GM10248 (cell line): ENCODE measurements at regions of chr17 and their contacts with region 1.

Region 1: GRCh38 chr17:73156166-73156840 is 8.5 kb upstream of the SSTR2 start:
- DNase-seq: peak; percentile 81
- CTCF ChIP-seq: peak; percentile 83

Region 2: GRCh38 chr17:73133911-73134649 is 22.2 kb before region 1 on chr17:
- CTCF ChIA-PET with region 1: interaction called, 12 read pairs
- POLR2A ChIA-PET with region 1: no interaction called
- DNase-seq: no peak
- CTCF ChIP-seq: no peak

Region 3: DNA sequence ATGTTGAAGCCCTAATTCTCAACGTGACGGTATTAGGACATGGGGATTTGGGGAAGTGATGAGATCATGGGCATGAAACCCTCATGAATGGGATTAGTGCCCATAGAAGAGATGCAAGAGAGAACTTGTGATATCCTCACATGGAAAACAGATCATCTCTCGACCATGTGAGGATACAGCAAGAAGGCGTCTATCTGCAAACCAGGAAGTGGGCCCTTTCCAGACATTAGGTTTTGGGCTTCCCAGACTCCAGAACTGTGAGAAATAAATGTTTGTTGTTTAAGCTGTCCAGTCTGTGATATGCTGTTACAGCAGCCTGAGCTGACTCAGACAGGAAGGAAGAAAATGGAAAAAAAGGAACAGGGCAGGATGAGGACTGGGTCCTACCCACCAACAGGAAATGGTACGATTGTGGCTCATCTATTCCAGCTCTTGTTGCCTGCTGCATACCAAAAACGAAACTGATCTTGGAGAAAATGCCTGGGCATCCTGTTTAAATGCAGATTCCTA is 13.4 kb before region 1 on chr17:
- CTCF ChIA-PET with region 1: interaction called, 13 read pairs
- POLR2A ChIA-PET with region 1: no interaction called
- DNase-seq: no peak
- CTCF ChIP-seq: no peak

Region 4: DNA sequence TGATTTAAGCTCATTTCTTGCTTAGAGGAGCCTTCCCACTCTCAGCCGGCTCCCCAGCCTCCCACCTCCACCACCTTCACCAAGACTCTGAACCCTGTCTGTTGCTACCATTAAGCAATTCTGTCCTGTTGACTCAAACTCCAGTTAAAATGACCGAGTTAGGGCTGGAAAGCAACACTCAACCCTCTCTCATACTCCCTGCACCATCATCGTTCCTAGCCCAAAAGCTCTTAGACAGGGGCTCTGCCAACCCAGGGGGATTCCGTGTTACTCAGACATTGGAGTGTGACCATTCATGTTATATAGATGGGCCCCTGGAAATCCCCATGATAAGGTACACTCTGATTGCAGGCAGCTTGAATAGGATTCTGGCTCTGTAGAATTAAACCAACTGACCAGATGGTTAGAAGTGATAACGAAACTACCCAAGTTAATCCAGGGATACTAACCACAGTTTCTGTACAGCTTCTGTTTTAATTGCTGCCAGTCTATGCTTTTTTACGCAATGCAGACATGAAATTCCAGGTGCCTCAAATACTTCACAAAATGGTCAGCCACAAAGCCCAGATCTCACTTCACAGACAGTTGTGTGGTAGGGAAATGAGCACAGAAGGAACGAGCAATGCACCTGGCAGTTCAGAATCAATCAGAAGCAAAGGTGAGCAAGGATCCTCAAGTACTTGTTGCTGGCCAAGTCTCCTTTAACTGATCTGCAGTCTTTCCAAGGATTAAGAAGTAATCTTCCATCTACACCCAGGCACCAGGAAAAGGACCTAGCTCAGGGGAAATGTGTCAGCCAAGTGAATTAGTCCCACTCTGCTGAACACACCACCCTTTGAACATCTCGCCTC is 10.7 kb after region 1 on chr17:
- CTCF ChIA-PET with region 1: interaction called, 13 read pairs
- POLR2A ChIA-PET with region 1: no interaction called
- DNase-seq: peak; percentile 30
- CTCF ChIP-seq: no peak

Region 5: DNA sequence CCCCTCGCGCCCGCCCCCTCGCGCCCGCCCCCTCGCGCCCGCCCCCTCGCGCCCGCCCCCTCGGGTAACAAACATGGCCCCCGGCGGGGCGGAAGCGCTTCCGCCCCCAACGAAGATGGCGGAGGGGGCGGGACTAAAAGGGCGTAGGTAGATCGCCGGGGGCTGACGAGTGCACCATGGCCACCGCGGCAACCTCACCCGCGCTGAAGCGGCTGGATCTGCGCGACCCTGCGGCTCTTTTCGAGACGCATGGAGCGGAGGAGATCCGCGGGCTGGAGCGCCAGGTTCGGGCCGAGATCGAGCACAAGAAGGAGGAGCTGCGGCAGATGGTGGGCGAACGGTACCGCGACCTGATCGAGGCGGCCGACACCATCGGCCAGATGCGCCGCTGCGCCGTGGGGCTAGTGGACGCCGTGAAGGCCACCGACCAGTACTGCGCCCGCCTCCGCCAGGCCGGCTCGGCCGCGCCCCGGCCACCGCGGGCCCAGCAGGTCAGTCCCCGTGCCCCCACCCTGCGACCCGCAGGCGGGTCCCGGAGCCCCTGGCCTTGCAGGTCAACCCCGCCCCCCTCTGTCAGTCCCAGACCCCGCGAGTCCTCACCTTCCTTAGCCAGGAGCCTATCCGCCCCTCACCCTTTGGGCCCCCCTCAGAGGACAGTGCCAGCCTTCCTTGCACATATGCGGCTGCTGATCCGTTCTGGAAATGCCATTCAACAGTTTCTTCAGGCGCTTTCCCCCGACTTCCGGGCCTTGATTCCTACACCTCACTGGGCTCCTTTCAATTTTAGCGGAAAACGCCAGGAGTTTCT is 36.8 kb after region 1 on chr17 and contains the start of gene COG1:
- CTCF ChIA-PET with region 1: interaction called, 22 read pairs
- POLR2A ChIA-PET with region 1: no interaction called
- DNase-seq: peak; percentile 96
- CTCF ChIP-seq: no peak